ENCODE measurements at regions of chr11 and their contacts with region 1.

Region 1: GRCh38 chr11:11036848-11037732 is 179.2 kb upstream of the ZBED5 start:
- DNase-seq: no peak
- ATAC-seq: peak; percentile 74
- H3K4me3 ChIP-seq: no peak overlapping the region
- H3K27ac ChIP-seq: no peak overlapping the region
- H3K4me1 ChIP-seq: no peaks in the 10 kb centered on the region
- H3K27me3 ChIP-seq: no peaks in the 10 kb centered on the region

Region 2: DNA sequence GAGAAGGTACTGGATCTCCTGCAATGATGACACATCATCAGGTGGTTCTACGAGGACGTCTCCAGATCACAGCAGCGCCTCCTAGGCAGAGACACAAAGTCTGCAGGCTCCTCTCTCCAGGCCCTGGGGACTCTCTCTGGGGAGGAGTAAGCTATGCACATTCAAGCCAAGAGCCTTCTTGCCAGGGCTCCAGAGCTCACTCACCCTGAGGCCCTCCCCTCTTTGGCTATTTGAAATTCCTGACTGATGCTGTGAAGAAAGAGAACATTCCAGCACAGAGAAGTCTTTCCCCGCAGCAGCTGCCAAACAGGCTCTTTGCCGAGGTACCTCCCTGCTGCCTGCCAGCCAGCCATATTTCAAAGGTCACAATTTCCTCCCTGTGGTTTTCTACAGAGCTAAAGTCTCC is 111.0 kb after region 1 on chr11:
- intact Hi-C with region 1: loop called in 1 of 2 experiments (anchors 10 kb)
- DNase-seq: peak; percentile 90 to 93
- ATAC-seq: peak; percentile 94
- H3K4me3 ChIP-seq: no peak overlapping the region
- H3K27ac ChIP-seq: no peak overlapping the region
- H3K4me1 ChIP-seq: peaks cover 0 to 3% of the 10 kb centered on the region in 2 donors
- H3K27me3 ChIP-seq: no peaks in the 10 kb centered on the region

Region 3: GRCh38 chr11:11265994-11266606 is 229.0 kb after region 1 on chr11:
- intact Hi-C with region 1: loop called (anchors 1 to 5 kb)
- DNase-seq: peak; percentile 59 to 84
- ATAC-seq: no peak
- H3K4me3 ChIP-seq: no peak overlapping the region
- H3K27ac ChIP-seq: no peak overlapping the region
- H3K4me1 ChIP-seq: no peaks in the 10 kb centered on the region
- H3K27me3 ChIP-seq: no peaks in the 10 kb centered on the region